Body of pancreas (tissue), 4 donors: ENCODE measurements at regions of chr2 and their contacts with region 1.

Region 1: DNA sequence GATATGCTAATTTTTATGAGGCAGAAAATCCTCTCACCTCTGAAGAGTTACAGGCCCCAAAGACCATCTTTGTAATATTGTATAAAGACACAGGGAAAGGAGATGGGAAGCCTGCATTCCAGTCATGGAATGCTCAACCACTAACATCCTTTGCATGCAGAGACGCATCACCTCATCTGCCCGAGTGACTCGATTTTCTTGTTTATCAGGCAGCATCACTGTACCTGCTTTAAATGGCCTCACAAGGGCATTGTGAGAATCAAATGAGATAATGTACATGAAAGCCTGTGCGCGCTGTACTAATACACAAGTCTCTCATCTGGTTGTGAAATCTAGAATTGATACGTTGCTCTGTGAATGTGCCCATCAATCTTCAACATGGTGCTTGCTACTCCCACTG is 10.2 kb upstream of the TMEM247 start:
- DNase-seq: no peak
- ATAC-seq: no peak
- H3K4me3 ChIP-seq: no peak overlapping the region
- H3K27ac ChIP-seq: no peak overlapping the region
- H3K4me1 ChIP-seq: no peaks in the 10 kb centered on the region
- H3K27me3 ChIP-seq: no peaks in the 10 kb centered on the region
- CTCF ChIP-seq: no peak
- POLR2A ChIP-seq: no peak

Region 2: GRCh38 chr2:46431481-46432205 is 37.5 kb before region 1 on chr2:
- intact Hi-C with region 1: no loop called
- DNase-seq: no peak
- ATAC-seq: no peak
- H3K4me3 ChIP-seq: no peak overlapping the region
- H3K27ac ChIP-seq: no peak overlapping the region
- H3K4me1 ChIP-seq: no peaks in the 10 kb centered on the region
- H3K27me3 ChIP-seq: no peaks in the 10 kb centered on the region
- CTCF ChIP-seq: no peak
- POLR2A ChIP-seq: no peak

Region 3: GRCh38 chr2:46645681-46646162 is 176.6 kb after region 1 on chr2:
- intact Hi-C with region 1: loop called (anchors 5 kb)
- DNase-seq: peak in 3 of 4 donors; percentile 38 to 57 (median 55)
- ATAC-seq: no peak
- H3K4me3 ChIP-seq: no peak overlapping the region
- H3K27ac ChIP-seq: no peak overlapping the region
- H3K4me1 ChIP-seq: no peaks in the 10 kb centered on the region
- H3K27me3 ChIP-seq: no peaks in the 10 kb centered on the region
- CTCF ChIP-seq: no peak
- POLR2A ChIP-seq: no peak